ENCODE measurements at regions of chr5 and their contacts with region 1.

Region 1: DNA sequence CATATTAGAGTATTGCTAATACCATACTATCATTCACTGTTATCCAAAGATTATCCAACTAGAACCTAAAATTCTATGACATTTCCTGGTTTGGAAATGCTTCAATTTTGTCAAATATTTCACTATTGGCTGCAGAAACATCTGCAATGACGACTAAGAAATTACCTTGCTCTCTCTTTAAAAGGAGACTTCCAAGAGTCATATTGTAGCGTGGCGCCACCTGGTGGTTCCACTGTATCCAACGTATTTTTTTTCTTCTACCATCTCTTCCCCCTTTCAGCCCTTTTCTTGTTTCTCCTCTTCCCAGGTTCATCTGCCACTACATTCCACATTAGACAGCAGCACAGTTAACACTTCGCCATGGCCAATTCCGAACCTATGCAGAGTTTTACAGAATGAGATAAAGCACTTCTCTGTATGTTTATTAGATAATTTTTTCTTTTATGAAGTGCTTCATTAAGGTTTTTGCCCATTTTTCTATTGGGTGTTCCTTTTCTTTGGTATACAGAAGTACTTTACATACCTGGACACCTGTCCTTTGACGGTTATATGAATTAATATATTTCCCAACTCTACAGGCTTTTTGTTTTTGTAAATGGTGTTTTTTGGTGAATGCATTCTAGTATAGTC is 153.5 kb downstream of the CDC42SE2 start:
- DNase-seq: peak; percentile 65
- H3K4me3 Mint-ChIP-seq: peak overlapping the region; percentile 32
- H3K27ac Mint-ChIP-seq: peak overlapping the region; percentile 59
- H3K4me1 Mint-ChIP-seq: peaks cover 37% of the 10 kb centered on the region
- H3K27me3 Mint-ChIP-seq: no peaks in the 10 kb centered on the region

Region 2: DNA sequence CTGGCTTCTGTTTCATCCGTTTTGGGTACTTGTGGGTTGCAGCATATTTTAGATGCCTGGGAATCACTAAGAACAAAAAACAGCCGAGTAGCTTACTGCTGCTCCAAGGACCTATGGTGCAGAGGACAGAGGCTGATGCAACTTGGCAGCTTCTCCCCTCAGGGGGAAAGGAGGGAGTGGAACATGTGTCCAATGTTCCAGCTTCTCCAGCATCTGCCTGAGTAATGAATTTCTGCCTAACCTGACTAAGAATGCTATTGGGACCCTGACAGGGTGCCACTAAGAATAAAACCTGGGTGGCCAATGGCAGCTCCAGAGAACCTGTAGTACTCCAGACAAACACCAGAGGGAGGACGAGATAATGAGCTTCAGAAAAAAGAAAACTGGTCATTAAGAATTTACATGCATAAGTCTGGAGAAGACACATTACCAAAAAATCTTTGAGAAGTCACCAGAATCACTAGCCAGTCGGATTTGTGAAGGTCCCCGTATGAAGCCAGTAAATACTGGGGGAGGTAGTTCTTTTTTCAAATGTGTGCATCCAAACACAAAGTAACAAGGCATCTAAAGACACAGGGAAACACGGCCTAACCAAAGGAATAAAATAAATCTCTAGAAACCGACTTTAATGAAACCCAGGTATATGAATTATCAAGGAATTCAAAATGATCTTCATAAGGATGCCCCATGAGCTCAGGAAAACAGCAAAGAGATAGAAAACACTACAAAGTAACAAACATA is 545.8 kb before region 1 on chr5:
- intact Hi-C with region 1: loop called (anchors 1 kb)
- DNase-seq: peak; percentile 12
- H3K4me3 Mint-ChIP-seq: no peak overlapping the region
- H3K27ac Mint-ChIP-seq: no peak overlapping the region
- H3K4me1 Mint-ChIP-seq: no peaks in the 10 kb centered on the region
- H3K27me3 Mint-ChIP-seq: no peaks in the 10 kb centered on the region

Region 3: DNA sequence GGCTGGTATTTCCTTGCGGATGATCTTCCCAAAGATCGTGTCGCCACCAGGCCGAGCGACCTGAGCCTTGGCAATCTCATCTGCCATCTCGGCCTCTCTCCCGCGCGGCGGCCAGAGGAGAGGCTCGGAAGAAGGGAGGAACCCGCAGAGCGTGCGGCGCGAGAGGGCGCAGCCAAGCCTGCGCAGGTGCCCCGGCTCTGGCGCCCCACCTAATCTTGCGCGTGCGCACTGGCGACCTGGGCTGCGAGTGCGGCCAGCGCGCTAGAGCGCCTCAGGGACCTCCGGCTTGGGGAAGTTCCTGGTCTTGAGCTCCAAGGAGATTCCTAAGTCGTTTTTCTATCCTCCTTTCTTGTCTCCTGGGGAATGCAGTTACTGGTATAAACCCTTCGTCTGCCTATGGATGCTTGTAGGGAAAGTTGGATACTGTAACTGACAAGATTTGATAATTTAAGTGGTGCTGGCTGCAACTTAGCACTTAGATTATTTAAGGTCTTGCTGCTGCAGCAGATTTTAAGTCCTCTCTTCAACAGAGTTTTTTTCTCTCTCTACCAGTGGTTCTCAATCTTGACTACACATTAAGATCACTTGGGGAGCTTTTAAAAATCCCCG is 252.1 kb before region 1 on chr5 and contains the start of gene HINT1:
- intact Hi-C with region 1: loop called (anchors 1 kb)
- DNase-seq: peak; percentile 93
- H3K4me3 Mint-ChIP-seq: peak within 1 kb of the TSS; percentile 99
- H3K27ac Mint-ChIP-seq: peak within 1 kb of the TSS; percentile 99
- H3K4me1 Mint-ChIP-seq: peaks cover 55% of the 10 kb centered on the region
- H3K27me3 Mint-ChIP-seq: peaks cover 2% of the 10 kb centered on the region
- total RNA-seq, gene HINT1: 249 and 262 TPM in 2 replicates

Region 4: GRCh38 chr5:131263648-131264450 is 153.5 kb before region 1 on chr5 and contains the start of gene CDC42SE2:
- intact Hi-C with region 1: loop called (anchors 1 kb)
- DNase-seq: peak; percentile 84
- H3K4me3 Mint-ChIP-seq: peak within 1 kb of the TSS; percentile 84
- H3K27ac Mint-ChIP-seq: peak within 1 kb of the TSS; percentile 92
- H3K4me1 Mint-ChIP-seq: peaks cover 48% of the 10 kb centered on the region
- H3K27me3 Mint-ChIP-seq: no peaks in the 10 kb centered on the region
- total RNA-seq, gene CDC42SE2: 100.0 and 103 TPM in 2 replicates

Region 5: DNA sequence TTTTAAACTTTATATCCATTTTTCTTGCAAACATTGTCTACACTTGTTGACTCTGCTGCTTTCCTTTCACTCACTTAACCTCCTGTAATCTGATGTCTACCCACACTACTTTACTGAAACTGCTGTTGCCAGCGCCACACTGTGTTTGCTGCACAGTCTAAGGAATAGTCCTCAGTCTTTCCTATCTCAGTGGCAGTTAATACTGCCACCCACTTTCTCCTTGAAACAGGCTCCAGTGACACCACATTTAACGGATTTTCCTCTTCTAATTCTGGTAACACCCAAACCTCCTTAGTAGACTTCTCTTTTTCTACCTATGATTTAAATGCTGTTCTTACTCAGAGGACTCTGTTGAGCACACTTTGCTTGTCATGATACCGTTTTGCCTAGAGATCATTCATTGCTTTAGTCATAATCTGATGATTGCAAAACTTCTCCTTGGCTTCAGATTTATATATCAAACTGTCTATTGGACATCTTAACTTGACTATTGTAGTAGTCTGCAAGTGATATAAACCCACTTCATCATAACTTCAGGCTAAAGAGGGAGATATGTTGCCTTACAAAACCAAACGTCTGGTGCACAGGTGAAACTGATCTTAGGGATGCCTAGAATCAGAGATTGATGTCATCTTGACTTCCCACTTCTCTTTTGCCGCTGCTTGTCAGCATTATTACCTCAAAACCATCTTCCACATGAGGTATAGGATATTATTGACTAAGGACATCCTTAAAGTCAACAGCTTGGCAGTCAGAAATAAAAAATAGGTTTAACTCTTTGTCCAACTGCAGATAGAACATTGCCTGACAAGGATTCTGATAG is 59.4 kb before region 1 on chr5:
- intact Hi-C with region 1: loop called (anchors 1 kb)
- DNase-seq: peak; percentile 26
- H3K4me3 Mint-ChIP-seq: peak overlapping the region; percentile 37
- H3K27ac Mint-ChIP-seq: peak overlapping the region; percentile 88
- H3K4me1 Mint-ChIP-seq: peaks cover 46% of the 10 kb centered on the region
- H3K27me3 Mint-ChIP-seq: no peaks in the 10 kb centered on the region

Region 6: DNA sequence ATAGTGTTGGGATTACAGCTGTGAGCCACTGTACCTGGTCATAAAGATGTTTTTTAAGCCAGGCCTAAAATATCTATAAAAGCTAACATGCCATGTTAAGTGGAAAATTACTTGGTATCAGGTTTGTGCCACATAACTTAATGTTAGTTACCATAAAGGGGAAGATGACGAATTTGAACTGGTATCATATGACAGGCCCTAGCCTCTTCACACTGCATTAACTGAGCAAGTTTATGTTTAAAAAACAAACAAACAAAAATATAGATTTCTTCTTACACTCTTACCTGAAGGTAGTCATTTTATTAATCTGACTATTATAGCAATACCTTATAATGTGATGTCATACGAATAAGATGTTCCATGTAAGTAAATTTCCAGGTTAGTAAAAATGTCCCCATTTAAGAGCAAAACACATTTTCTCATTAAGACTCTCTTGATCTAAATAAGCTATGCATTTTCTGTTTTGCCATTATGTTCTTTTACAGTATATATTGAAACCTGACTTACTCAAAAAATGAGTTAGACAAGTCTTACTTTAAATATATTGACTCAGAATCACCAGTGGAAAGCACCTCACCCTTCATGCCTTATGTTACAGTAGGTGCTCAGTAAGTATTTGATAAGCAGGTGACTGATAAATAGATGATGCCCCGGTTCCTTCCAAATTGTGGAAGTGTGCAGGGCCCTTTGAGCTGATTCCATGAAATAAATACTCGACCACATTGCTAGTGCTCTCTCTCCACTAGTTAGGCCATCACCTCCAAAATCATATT is 28.1 kb before region 1 on chr5:
- intact Hi-C with region 1: no loop called
- DNase-seq: no peak
- H3K4me3 Mint-ChIP-seq: peak overlapping the region; percentile 42
- H3K27ac Mint-ChIP-seq: peak overlapping the region; percentile 96
- H3K4me1 Mint-ChIP-seq: peaks cover 80% of the 10 kb centered on the region
- H3K27me3 Mint-ChIP-seq: no peaks in the 10 kb centered on the region

Region 7: DNA sequence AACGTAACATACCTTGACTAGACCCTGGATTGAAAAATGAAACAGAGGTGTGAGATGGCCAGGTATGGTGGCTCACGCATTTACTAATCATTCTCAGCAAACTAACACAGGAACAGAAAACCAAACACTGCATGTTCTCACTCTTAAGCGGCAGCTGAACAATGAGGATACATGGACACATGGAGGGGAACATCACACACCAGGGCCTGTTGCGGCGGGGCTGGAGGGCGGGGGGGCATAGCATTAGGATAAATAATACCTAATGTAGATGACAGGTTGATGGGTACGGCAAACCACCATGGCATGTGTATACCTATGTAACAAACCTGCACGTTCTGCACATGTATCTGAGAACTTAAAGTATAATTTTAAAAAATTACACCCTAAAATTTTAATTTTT is 201.7 kb after region 1 on chr5:
- intact Hi-C with region 1: no loop called
- DNase-seq: no peak
- H3K4me3 Mint-ChIP-seq: no peak overlapping the region
- H3K27ac Mint-ChIP-seq: no peak overlapping the region
- H3K4me1 Mint-ChIP-seq: peaks cover 32% of the 10 kb centered on the region
- H3K27me3 Mint-ChIP-seq: no peaks in the 10 kb centered on the region